ENCODE measurements at regions of chr7 and their contacts with region 1.

Region 1: DNA sequence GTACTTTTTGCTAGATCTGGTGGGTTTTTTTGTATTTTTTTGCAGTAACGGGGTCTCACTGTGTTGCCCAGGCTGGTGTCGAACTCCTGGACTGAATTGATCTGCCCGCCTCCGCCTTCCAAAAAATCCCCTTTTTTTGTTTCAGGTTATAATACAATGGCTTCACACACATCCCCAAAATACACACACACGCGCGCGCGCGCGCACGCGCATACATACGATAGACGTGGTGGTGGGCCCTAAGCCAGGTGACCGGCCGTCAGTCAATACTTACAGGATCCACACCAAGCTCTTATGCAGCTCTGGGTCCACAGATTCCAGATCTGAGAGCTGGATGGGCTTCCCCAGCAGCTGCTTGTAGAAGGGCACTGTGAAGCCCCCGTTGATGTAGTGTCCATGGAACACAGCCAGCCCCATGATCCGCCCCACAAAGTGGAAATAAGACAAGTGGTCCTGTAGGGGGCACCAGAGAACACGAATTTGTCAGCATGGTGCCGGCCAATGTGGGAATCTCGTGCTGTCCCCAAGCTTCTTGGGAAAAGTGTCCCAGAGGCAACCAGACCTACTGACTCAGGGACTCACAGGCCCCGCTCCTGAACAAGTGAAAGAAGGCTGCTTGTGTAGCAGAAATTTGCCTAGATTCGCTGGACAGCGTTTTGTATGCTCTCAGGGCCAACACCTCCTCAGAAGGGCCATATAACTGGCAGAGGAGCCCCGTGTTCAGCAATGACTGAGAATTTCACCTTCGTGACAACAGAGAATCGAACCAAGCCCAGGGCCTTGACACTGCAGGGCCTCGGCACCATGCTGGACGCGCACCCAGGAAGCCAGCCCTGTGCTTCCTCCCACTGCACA is 103.6 kb downstream of the SMURF1 start:
- DNase-seq: peak; percentile 64 to 75
- H3K4me3 ChIP-seq: no peak overlapping the region
- H3K27ac ChIP-seq: peak overlapping the region; percentile 20
- H3K4me1 ChIP-seq: no peaks in the 10 kb centered on the region
- H3K27me3 ChIP-seq: no peaks in the 10 kb centered on the region
- CTCF ChIP-seq: peak; percentile 81

Region 2: DNA sequence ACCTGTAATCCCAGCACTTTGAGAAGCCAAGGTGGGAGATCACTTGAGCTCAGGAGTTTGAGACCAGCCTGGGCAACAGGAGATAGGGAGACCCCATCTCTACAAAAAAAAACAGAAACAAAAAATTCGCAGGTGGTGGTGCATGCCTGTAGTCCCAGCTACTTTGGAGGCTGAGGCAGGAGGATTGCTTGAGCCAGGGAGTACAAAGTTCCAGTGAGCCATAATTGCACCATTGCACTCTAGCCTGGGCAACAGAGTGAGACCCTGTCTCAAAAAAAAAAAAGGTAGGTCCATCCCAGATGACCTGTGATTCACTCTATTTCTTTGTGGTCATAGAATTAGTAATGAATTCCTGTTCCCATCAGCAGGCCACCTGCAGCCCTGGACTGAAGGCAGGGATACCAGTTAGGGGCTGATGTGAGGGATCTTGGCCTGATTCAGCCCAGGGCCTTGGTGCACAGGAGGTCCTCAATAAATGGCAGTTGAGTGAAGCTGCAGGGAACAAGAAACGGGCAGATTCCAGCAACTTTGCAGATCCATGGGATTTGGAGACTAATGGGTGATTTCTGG is 232.2 kb after region 1 on chr7 and contains the start of gene MYH16:
- CTCF ChIA-PET with region 1: no interaction called
- POLR2A ChIA-PET with region 1: no interaction called
- intact Hi-C with region 1: loop called (anchors 2 kb)
- DNase-seq: peak; percentile 44 to 73
- H3K4me3 ChIP-seq: peak within 1 kb of the TSS; percentile 24; the same call in 1 of the 2 replicates
- H3K27ac ChIP-seq: peak within 1 kb of the TSS; percentile 95
- H3K4me1 ChIP-seq: peaks cover 59% of the 10 kb centered on the region
- H3K27me3 ChIP-seq: no peaks in the 10 kb centered on the region
- CTCF ChIP-seq: no peak
- total RNA-seq, gene MYH16: 11.7 and 18.0 TPM in 2 replicates

Region 3: GRCh38 chr7:99331002-99331401 is 290.7 kb after region 1 on chr7:
- CTCF ChIA-PET with region 1: no interaction called
- POLR2A ChIA-PET with region 1: no interaction called
- intact Hi-C with region 1: loop called (anchors 5 kb)
- DNase-seq: no peak
- H3K4me3 ChIP-seq: peak overlapping the region; percentile 17; the same call in 1 of the 2 replicates
- H3K27ac ChIP-seq: peak overlapping the region; percentile 97
- H3K4me1 ChIP-seq: peaks cover 52% of the 10 kb centered on the region
- H3K27me3 ChIP-seq: no peaks in the 10 kb centered on the region
- CTCF ChIP-seq: no peak

Region 4: DNA sequence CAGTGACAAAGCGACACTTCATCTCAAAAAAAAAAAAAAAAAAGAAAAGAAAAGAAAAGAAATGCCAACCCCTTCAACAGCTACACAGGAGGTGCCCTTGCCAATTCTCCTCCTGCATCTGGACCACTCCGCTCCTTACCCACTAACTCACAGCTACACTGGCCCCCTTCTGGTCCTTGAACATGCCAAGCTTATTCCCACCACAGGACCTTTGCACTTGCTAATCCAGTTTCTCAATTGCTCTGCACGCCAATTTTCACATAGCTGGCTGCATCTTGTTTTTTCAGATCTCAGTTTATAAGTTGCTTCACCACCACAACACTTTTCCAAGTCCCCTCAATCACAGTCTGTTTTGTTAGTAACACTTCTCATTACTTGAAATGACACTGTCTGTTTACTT is 362.5 kb after region 1 on chr7:
- CTCF ChIA-PET with region 1: interaction called, 11 read pairs
- POLR2A ChIA-PET with region 1: no interaction called
- intact Hi-C with region 1: no loop called
- DNase-seq: no peak
- H3K4me3 ChIP-seq: no peak overlapping the region
- H3K27ac ChIP-seq: no peak overlapping the region
- H3K4me1 ChIP-seq: peaks cover 13% of the 10 kb centered on the region
- H3K27me3 ChIP-seq: no peaks in the 10 kb centered on the region
- CTCF ChIP-seq: no peak

Measured in PC-9 (cell line).